Prostate gland (tissue), 2 donors: ENCODE measurements at regions of chr1 and their contacts with region 1.

Region 1: DNA sequence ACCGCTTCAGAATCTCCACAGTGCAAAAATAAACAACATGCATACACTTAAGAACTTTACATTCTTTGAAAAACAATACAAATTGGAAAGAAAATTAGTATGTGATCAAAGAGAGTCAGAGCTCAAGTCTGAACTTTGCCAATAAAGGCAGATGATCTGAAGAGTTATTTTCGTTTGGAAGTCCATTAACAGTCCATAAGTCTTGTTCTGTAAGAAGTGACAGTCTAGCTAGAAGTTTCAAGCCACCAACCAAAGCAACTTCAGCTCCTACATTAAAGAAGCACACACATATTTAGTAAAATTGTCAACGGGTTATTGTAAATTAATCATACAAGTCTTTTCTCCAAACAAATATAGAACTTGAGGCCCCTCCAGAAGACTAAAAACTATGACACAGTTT is 20.7 kb downstream of the ANGEL2 start:
- DNase-seq: no peak
- H3K4me3 ChIP-seq: no peak overlapping the region
- H3K27ac ChIP-seq: no peak overlapping the region
- H3K4me1 ChIP-seq: no peaks in the 10 kb centered on the region
- H3K27me3 ChIP-seq: no peaks in the 10 kb centered on the region
- CTCF ChIP-seq: no peak
- POLR2A ChIP-seq: no peak

Region 2: DNA sequence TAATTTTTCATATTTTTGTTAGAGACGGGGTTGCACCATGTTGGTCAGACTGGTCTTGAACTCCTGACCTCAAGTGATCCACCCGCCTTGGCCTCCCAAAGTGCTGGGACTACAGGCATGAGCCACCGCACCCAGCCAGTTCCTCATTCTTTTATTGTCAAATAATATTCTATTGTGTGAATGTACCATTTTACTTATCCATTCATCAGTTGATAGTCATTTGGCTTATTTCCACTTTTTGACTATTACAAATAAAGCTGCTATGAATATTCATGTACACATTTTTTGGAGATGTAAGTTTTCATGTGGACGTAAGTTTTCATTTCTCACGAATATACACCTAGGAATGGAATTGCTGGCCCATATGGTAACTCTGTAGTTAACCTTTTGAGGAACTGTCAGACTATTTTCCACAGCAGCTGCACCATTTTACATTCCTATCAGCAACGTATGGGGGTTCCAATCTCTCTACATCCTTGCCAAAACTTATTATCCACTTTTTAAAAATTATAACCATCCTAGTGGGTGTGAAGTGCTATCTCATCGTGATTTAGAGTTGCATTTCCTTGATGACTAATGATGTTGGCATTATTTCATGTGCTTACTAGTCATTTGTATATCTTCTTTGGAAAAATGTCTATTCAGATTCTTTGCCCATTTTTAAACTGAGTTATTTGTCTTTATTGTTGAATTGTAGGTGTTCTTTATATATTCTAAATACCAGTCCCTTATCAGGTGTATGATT is 592.9 kb before region 1 on chr1:
- intact Hi-C with region 1: no loop called
- DNase-seq: no peak
- H3K4me3 ChIP-seq: no peak overlapping the region
- H3K27ac ChIP-seq: no peak overlapping the region
- H3K4me1 ChIP-seq: no peaks in the 10 kb centered on the region
- H3K27me3 ChIP-seq: no peaks in the 10 kb centered on the region
- CTCF ChIP-seq: no peak
- POLR2A ChIP-seq: no peak

Region 3: GRCh38 chr1:212814537-212815334 is 180.2 kb before region 1 on chr1:
- intact Hi-C with region 1: loop called (anchors 5 kb)
- DNase-seq: peak; percentile 13
- H3K4me3 ChIP-seq: no peak overlapping the region
- H3K27ac ChIP-seq: no peak overlapping the region
- H3K4me1 ChIP-seq: no peaks in the 10 kb centered on the region
- H3K27me3 ChIP-seq: no peaks in the 10 kb centered on the region
- CTCF ChIP-seq: peak in 3 of 4 experiments; percentile 32 to 42 (median 40)
- POLR2A ChIP-seq: no peak

Region 4: DNA sequence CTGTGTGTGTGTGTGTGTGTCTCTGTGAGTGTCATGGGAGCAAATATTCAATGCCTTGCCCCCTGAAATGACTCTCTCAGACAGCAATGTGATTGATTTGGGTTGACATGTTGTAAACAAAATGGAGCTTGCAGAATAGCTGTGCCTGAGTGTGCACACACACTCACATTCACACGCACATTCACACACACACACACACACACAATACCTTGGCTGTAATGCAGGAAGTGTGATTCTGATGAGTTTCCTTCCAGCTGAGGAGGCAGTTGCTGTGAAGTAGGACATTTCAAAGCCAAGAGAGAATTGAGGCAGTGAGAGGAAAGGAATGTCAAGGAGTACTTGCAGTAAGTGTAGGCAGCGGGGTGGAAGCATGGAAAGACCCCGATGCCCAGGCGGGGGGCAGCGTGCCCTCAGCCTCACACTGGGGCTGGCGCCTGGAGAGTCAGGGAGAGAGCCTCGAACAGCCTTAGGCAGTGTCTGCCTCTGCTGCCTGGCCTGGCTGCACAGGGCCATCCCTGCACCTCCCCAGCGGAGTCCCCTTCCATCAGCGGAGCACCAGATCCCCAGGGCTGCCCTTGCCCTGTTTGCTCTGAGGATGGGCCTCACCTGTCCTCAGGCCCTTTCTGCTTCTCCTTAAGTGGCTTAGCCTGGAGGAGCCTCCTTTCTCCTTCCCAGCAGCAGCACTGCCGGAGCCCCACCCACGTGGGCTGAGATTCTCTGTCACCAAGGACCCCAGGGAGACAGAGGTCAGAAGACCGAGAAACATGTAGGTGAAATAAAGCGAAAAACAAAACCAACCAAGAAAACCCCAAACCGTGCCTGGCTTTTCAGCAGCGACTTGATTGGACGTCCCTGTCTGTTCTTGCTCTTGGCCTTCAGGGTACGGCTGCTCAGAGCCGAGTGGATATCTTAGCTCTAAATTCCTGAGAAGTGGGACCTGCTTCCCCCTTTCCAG is 35.4 kb before region 1 on chr1:
- intact Hi-C with region 1: no loop called
- DNase-seq: no peak
- H3K4me3 ChIP-seq: no peak overlapping the region
- H3K27ac ChIP-seq: no peak overlapping the region
- H3K4me1 ChIP-seq: no peaks in the 10 kb centered on the region
- H3K27me3 ChIP-seq: no peaks in the 10 kb centered on the region
- CTCF ChIP-seq: no peak
- POLR2A ChIP-seq: no peak